HepG2 (cell line): ENCODE measurements at regions of chr11 and their contacts with region 1.

Region 1: DNA sequence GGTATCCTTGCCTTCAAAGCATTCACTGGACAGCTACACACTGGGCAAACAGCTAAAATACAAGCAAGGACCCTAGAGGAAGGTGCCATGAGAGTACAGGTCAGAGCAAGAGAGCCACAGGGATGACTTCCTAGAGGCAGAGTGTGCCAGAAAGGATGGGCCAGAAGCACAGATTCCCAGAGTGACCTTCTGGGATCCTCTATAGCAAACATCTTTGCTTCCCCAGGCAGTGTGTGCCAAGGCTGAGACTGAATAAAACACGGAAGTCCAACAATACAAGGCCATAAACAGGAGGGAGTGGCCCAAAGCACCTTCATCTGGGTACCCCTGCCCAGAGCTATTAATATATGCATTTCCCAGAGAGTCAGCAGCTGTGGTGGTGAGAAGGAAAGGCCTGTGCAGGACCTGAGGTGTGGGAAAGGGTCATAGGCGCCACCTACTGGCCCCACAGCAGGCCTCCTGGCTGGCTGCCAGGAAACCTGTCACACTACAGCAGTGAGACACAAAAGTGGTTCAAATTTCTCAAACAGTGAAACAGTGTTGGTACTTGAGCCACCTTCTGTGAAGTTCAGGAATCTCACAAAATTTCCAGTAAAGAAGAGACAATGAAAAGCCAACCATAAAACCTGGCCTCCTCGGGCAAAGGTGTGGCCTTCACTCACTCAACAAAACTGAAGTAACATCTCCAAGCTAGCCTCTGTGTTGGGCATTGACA is 20.3 kb downstream of the CLPB start:
- DNase-seq: peak; percentile 76
- ATAC-seq: peak; percentile 40
- H3K4me3 ChIP-seq: no peak overlapping the region
- H3K27ac ChIP-seq: peak overlapping the region; percentile 37
- H3K4me1 ChIP-seq: peaks cover 99% of the 10 kb centered on the region
- H3K27me3 ChIP-seq: no peaks in the 10 kb centered on the region
- CTCF ChIP-seq: peak; percentile 93
- EP300 ChIP-seq: peak in 1 of 2 experiments; percentile 40; a peak in 1 of 4 replicates
- POLR2A ChIP-seq: no peak
- RAD21 ChIP-seq: peak; percentile 91

Region 2: DNA sequence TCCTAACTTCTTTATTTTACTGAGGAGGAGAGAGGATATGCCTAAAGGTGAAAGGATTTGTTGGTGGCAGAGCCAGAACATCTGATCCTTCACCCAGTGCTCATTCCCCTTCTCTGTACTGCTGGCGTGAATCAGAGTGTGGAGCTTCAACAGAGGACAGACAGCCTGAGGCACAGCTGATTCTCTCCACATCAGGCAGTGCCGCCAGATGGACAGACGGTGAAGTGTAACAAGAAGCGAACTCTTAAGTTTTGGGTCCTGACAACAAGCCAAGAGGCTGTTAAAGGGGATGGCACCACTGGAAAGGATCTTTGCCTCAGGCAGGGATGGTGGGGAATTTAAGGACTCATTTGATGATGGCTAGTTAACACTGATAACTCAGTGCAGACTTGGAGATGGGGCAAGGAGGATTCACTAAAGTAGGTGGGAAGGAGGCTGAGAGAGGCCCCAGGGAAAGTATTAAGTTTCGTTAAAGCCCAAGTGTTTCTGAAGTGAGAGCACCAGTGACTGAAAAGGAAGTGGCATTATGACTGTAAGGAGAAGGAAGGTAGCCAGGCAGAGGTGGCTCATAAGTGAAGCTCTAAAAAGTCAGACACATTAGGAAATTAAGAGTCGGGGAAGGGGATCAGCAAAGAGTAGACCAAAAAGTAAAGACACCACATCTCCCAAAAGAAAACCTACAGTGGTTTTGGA is 61.1 kb before region 1 on chr11:
- CTCF ChIA-PET with region 1: interaction called, 35 read pairs
- POLR2A ChIA-PET with region 1: interaction called, 3 read pairs
- in situ Hi-C with region 1: no loop called
- intact Hi-C with region 1: loop called (anchors 1 kb)
- DNase-seq: no peak
- ATAC-seq: no peak
- H3K4me3 ChIP-seq: no peak overlapping the region
- H3K27ac ChIP-seq: no peak overlapping the region
- H3K4me1 ChIP-seq: peaks cover 11% of the 10 kb centered on the region
- H3K27me3 ChIP-seq: no peaks in the 10 kb centered on the region
- CTCF ChIP-seq: no peak
- EP300 ChIP-seq: no peak
- POLR2A ChIP-seq: no peak
- RAD21 ChIP-seq: no peak

Region 3: DNA sequence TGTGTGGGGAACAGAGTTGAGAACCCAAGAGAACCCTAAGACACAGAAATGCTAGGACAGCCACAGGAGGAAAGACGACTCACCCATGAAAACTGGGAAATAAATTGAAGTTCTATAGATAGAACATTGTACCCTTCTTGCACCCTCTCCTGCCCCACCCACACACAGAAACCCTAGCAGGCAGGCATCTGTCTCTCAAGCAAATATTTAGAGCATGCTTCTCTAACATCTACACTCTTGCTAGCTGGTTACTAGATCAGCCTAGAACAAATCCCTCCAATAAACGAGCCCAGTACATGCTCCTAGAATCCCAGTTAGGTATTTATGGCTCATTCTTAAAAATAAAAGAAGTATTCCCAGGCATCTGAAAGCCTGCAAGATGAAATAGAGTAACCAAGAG is 52.3 kb after region 1 on chr11:
- CTCF ChIA-PET with region 1: no interaction called
- POLR2A ChIA-PET with region 1: no interaction called
- in situ Hi-C with region 1: no loop called
- intact Hi-C with region 1: no loop called
- DNase-seq: no peak
- ATAC-seq: no peak
- H3K4me3 ChIP-seq: no peak overlapping the region
- H3K27ac ChIP-seq: no peak overlapping the region
- H3K4me1 ChIP-seq: no peaks in the 10 kb centered on the region; the same call in 1 of the 2 replicates
- H3K27me3 ChIP-seq: peaks cover 0 to 33% of the 10 kb centered on the region in 2 experiments; a peak in 3 of 5 replicates
- CTCF ChIP-seq: no peak
- EP300 ChIP-seq: no peak
- POLR2A ChIP-seq: no peak
- RAD21 ChIP-seq: no peak